ENCODE measurements at regions of chr6 and their contacts with region 1.

Region 1: DNA sequence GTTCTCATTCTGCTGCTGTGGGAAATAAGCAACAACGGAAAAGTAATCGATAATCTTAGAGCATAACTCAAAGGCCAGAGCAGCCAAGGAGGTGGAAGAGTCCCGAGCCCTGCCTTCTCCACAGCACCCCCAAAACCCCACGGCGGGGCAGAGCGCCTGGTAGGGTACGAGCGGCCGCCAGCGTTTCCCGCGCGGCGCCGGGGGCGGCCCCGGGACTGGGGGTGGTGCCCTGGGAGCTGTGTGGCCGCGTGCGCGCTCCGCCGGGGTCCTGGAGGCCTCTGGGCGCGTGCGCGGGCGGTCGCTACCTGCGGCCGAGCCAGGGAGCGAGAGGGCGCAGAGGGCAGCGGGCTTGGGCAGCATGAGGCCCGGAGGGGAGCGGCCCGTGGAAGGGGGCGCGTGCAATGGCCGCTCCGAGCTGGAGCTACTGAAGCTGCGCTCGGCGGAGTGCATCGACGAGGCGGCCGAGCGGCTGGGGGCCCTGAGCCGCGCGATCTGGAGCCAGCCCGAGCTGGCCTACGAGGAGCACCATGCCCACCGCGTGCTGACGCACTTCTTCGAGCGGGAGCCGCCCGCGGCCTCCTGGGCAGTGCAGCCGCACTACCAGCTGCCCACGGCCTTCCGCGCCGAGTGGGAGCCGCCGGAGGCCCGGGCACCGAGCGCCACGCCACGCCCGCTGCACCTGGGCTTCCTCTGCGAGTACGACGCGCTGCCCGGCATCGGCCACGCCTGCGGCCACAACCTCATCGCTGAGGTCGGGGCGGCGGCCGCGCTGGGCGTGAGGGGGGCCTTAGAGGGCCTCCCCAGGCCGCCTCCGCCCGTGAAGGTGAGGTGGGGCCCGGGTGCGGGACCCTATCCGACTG is at the start of gene PM20D2:
- DNase-seq: peak; percentile 63
- H3K4me3 ChIP-seq: peak within 1 kb of the TSS; percentile 52 to 83 (median 79)
- H3K27ac ChIP-seq: peak within 1 kb of the TSS; percentile 72
- H3K4me1 ChIP-seq: peaks cover 10% of the 10 kb centered on the region
- H3K27me3 ChIP-seq: peaks cover 5 to 7% of the 10 kb centered on the region in 2 experiments
- CTCF ChIP-seq: no peak
- POLR2A ChIP-seq: peak; percentile 44
- total RNA-seq, gene PM20D2: 8.3 and 10.9 TPM in 2 replicates

Region 2: GRCh38 chr6:88963139-88964090 is 182.6 kb before region 1 on chr6 and contains the start of gene RNGTT:
- CTCF ChIA-PET with region 1: interaction called, 3 read pairs
- POLR2A ChIA-PET with region 1: no interaction called
- dilution Hi-C with region 1: no loop called
- intact Hi-C with region 1: loop called (anchors 1 kb)
- DNase-seq: peak; percentile 98
- H3K4me3 ChIP-seq: peak within 1 kb of the TSS; percentile 93 to 99 (median 96)
- H3K27ac ChIP-seq: peak within 1 kb of the TSS; percentile 71
- H3K4me1 ChIP-seq: peaks cover 12% of the 10 kb centered on the region
- H3K27me3 ChIP-seq: no peaks in the 10 kb centered on the region
- CTCF ChIP-seq: no peak
- POLR2A ChIP-seq: peak; percentile 50
- total RNA-seq, gene RNGTT: 13.1 and 13.5 TPM in 2 replicates

Region 3: GRCh38 chr6:90393232-90393884 is 1247.3 kb after region 1 on chr6:
- CTCF ChIA-PET with region 1: no interaction called
- POLR2A ChIA-PET with region 1: no interaction called
- dilution Hi-C with region 1: no loop called
- intact Hi-C with region 1: no loop called
- DNase-seq: peak; percentile 65
- H3K4me3 ChIP-seq: no peak overlapping the region
- H3K27ac ChIP-seq: no peak overlapping the region
- H3K4me1 ChIP-seq: peaks cover 5% of the 10 kb centered on the region
- H3K27me3 ChIP-seq: peaks cover 7 to 17% of the 10 kb centered on the region in 2 experiments
- CTCF ChIP-seq: peak; percentile 67 to 69
- POLR2A ChIP-seq: no peak

Measured in endothelial cell of umbilical vein (primary cell).